Ascending aorta (tissue), 2 donors: ENCODE measurements at regions of chr2 and their contacts with region 1.

Region 1: DNA sequence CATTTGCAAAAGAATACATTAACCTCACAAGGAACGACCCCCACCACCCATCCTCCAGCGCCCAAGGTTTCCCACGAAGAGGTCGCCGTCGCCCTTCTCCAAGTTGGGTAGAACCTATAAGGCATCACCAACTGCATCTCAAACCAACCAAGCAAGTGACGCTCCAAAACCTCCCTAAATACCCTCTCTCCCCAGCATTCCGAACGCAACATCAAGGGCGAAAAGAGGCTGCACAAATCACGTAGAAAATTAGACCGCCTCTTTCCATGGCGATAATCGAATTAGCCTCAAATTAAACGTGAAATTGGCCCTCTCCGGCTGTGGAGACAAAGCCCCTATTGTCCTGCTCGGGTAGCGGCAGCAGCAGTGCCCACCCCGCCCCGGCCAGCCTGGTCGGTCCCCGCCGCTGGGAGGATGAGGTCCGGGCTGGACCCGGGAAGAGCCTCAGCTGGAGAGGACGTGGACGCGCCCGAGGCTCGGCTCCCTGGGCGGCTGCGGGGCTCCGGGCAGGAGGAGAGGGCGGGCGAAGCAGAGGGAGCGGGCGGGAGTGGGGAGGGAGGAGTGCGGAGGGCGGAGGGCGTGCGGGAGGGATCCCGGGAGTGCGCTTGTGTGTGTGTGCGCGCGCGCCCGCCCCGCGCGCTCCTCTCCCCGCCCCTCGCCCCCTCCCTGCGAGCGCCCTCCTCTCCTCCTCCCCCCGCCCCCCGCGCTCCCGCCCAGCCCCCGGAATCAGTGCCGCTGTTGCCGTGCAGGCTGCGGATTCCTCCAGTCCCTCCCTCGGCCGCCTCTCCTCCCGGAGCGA is at the start of gene SPTBN1:
- DNase-seq: peak; percentile 38 to 92
- H3K4me3 ChIP-seq: peak within 1 kb of the TSS; percentile 77 to 96
- H3K27ac ChIP-seq: peak within 1 kb of the TSS; percentile 88 to 92
- H3K4me1 ChIP-seq: peaks cover 0 to 11% of the 10 kb centered on the region in 2 donors
- H3K27me3 ChIP-seq: no peaks in the 10 kb centered on the region
- CTCF ChIP-seq: peak in 1 of 3 experiments; percentile 6
- total RNA-seq, gene SPTBN1: 246 TPM

Region 2: DNA sequence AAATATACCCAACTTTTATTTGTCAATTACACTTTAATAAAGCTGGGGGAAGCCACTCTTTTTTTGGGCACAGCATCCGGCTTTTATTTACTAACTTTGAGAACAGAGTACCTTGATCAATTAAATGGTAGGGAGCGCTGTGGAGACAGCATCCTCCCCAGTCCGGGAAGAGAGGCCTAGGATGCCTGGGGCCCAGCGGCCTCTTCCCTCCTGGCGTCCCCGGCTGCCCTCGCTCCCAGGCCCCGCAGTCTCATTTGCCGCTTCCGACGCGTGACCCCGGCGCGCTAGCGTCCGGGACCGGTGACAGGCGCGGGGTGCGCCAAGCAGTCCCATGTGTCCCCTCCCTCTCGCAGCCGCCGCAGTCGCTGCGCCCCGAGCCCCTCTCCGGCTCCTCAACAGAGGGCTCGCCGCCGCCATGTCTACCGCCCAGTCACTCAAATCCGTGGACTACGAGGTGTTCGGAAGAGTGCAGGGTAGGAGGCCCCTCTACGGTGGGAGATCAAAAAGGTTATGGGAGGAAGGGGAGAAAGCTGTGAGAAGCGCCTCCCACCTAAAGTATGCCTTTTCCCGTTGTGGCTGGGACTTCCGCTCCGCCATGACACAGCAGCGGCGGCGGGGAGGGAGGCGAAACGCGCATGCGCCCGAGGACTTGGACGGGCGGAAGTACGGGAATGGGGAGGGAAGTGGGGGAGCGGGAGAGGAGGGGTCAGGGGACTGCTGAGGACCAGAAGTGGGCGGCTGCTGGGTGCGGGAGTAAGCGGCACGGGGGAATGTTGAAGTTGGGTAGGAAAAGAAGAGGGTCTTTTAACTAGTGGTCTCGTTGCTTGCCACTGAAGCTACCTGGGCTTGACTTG is 340.3 kb before region 1 on chr2 and contains the start of gene ACYP2:
- intact Hi-C with region 1: loop called (anchors 2 kb)
- DNase-seq: peak; percentile 70 to 97
- H3K4me3 ChIP-seq: peak within 1 kb of the TSS; percentile 62 to 83
- H3K27ac ChIP-seq: peak within 1 kb of the TSS; percentile 98 to 99
- H3K4me1 ChIP-seq: no peaks in the 10 kb centered on the region
- H3K27me3 ChIP-seq: no peaks in the 10 kb centered on the region
- CTCF ChIP-seq: peak in 1 of 3 experiments; percentile 5
- total RNA-seq, gene ACYP2: 0.96 TPM

Region 3: DNA sequence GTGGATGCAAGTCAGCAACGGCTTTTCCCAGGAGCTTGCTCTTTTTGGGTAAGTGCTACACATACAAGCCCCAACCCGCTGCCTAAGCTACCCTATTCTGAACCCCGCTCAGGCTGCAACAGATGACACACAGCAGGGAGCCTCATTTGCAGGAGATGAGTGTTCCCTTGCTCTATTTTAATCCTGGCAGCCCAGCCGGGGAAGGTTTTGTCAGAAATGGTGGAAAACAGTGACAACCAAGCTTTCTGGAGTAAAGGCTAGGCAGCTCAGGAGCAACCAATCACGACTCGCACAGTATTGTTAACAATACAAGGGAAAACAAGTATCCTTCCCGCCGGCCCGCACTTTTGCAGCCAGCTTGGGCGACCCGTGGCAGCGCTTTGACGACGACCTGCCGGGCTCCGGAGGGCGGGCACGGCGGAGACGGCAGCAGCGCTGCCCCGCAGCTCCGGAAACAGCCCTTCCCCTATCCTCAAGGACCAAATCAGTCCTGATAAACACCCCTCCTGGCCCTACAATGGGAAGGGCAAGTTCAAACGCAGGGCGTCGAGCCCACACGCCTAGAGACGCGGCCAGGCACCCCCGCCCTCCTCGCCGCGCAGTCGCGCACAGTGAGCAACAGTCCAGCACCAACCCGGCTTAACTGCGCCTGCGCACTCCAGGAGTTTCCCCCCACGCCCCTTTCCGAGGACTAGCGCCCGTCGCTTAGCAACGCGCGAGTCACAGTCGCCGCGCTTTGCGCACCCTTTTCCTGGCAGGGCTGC is 125.4 kb before region 1 on chr2:
- intact Hi-C with region 1: loop called (anchors 1 kb)
- DNase-seq: peak; percentile 87 to 98
- H3K4me3 ChIP-seq: peak overlapping the region; percentile 67 to 69
- H3K27ac ChIP-seq: peak overlapping the region; percentile 88 to 96
- H3K4me1 ChIP-seq: peaks cover 2% of the 10 kb centered on the region in 2 donors
- H3K27me3 ChIP-seq: no peaks in the 10 kb centered on the region
- CTCF ChIP-seq: no peak

Region 4: DNA sequence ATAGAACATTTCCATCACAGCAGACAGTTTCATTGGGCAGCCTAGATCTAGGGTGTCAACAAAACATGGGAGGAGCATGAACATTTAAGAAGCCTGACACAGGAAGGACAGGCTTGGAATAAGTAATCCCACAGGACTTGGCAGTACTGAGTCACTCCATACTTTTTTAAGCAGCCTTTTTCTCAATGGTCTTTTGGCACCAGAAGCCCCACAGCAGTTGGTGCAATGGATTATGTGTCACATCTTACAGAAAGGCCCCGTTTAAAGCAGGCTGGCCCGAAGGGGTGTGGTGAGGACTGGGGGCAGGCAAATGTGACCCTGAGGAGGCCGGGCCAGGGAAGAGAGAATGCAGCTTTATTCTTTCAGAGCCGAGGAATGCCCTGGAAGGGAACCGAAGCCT is 27.0 kb after region 1 on chr2:
- intact Hi-C with region 1: loop called (anchors 1 kb)
- DNase-seq: peak in 1 of 2 donors; percentile 89
- H3K4me3 ChIP-seq: no peak overlapping the region
- H3K27ac ChIP-seq: peak overlapping the region; percentile 45 to 69
- H3K4me1 ChIP-seq: peaks cover 0 to 39% of the 10 kb centered on the region in 2 donors
- H3K27me3 ChIP-seq: no peaks in the 10 kb centered on the region
- CTCF ChIP-seq: no peak

Region 5: GRCh38 chr2:54599914-54600313 is 144.2 kb after region 1 on chr2:
- intact Hi-C with region 1: loop called (anchors 5 kb)
- DNase-seq: peak in 1 of 2 donors; percentile 83
- H3K4me3 ChIP-seq: no peak overlapping the region
- H3K27ac ChIP-seq: peak overlapping the region; percentile 75 to 79
- H3K4me1 ChIP-seq: peaks cover 29 to 80% of the 10 kb centered on the region in 2 donors
- H3K27me3 ChIP-seq: no peaks in the 10 kb centered on the region
- CTCF ChIP-seq: no peak

Region 6: GRCh38 chr2:54723131-54723995 is 267.6 kb after region 1 on chr2 and contains the start of gene EML6:
- intact Hi-C with region 1: loop called (anchors 1 kb)
- DNase-seq: peak; percentile 98 to 100
- H3K4me3 ChIP-seq: peak within 1 kb of the TSS; percentile 96
- H3K27ac ChIP-seq: peak within 1 kb of the TSS; percentile 69 to 84
- H3K4me1 ChIP-seq: peaks cover 0 to 6% of the 10 kb centered on the region in 2 donors
- H3K27me3 ChIP-seq: no peaks in the 10 kb centered on the region
- CTCF ChIP-seq: peak in 1 of 3 experiments; percentile 22
- total RNA-seq, gene EML6: not detected